Caco-2 (cell line): ENCODE measurements at regions of chr14 and their contacts with region 1.

Region 1: GRCh38 chr14:57533214-57533613 is 39.6 kb upstream of the CCDC198 start:
- DNase-seq: peak in 1 of 2 experiments; percentile 35
- H3K4me3 ChIP-seq: no peak overlapping the region
- H3K4me3 Mint-ChIP-seq: no peak overlapping the region
- H3K27ac Mint-ChIP-seq: no peak overlapping the region
- H3K4me1 ChIP-seq: no peaks in the 10 kb centered on the region
- H3K4me1 Mint-ChIP-seq: no peaks in the 10 kb centered on the region
- H3K27me3 ChIP-seq: no peaks in the 10 kb centered on the region
- H3K27me3 Mint-ChIP-seq: peaks cover 4% of the 10 kb centered on the region
- CTCF ChIP-seq: peak in 1 of 2 experiments; percentile 26

Region 2: DNA sequence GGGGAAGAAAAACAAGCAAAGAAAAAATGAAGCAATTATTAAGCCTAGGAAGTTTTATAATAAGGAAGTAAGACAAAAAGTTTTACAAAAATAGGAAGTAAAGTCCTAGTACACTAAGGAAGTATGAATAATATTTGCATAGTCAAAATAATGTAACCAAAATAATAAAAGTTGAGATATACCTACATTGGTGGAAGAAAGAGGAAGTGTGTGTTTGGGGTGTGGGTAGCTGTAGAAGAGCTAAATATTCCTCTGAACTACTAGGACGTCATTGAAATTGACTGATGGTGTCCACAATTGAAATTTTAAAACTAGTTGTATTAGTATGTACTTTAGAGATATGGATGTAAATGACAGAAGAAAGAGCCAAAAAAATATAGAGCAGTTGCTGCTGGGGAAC is 494.5 kb before region 1 on chr14:
- CTCF ChIA-PET with region 1: no interaction called
- POLR2A ChIA-PET with region 1: no interaction called
- intact Hi-C with region 1: no loop called
- DNase-seq: no peak
- H3K4me3 ChIP-seq: no peak overlapping the region
- H3K4me3 Mint-ChIP-seq: no peak overlapping the region
- H3K27ac Mint-ChIP-seq: no peak overlapping the region
- H3K4me1 ChIP-seq: no peaks in the 10 kb centered on the region
- H3K4me1 Mint-ChIP-seq: no peaks in the 10 kb centered on the region
- H3K27me3 ChIP-seq: no peaks in the 10 kb centered on the region
- H3K27me3 Mint-ChIP-seq: peaks cover 14% of the 10 kb centered on the region
- CTCF ChIP-seq: no peak

Region 3: GRCh38 chr14:57574617-57575303 is 41.5 kb after region 1 on chr14:
- CTCF ChIA-PET with region 1: no interaction called
- POLR2A ChIA-PET with region 1: no interaction called
- intact Hi-C with region 1: loop called (anchors 2 kb)
- DNase-seq: peak in 1 of 2 experiments; percentile 7
- H3K4me3 ChIP-seq: no peak overlapping the region
- H3K4me3 Mint-ChIP-seq: no peak overlapping the region
- H3K27ac Mint-ChIP-seq: no peak overlapping the region
- H3K4me1 ChIP-seq: no peaks in the 10 kb centered on the region
- H3K4me1 Mint-ChIP-seq: no peaks in the 10 kb centered on the region
- H3K27me3 ChIP-seq: no peaks in the 10 kb centered on the region
- H3K27me3 Mint-ChIP-seq: peaks cover 2% of the 10 kb centered on the region
- CTCF ChIP-seq: peak in 1 of 2 experiments; percentile 38